ENCODE measurements at regions of chr1 and their contacts with region 1.

Region 1: DNA sequence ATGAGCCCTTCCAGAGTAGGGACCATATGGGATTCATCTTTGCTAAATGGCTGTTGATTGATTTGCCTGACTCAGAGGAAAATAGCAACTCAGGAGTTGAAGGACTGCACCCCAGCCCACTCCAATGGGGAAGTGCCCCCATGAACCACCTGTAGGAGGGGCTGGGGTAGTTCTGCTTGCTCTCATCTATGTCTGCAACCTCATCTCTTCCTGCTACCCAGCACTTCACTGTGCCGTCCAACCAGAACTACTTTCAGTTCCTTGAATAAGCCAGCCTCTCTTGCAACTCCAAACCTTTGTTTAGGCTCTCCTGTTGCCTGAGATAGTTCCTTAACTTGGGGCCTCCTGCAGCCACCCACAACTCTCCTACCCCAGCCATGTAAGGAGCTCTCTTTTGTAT is 26.6 kb downstream of the BEND5 start:
- DNase-seq: no peak
- H3K4me3 ChIP-seq: no peak overlapping the region
- H3K27ac ChIP-seq: no peak overlapping the region
- H3K4me1 ChIP-seq: peaks cover 0 to 16% (median 5%) of the 10 kb centered on the region in 4 donors
- H3K27me3 ChIP-seq: no peaks in the 10 kb centered on the region
- CTCF ChIP-seq: no peak
- EP300 ChIP-seq: no peak
- POLR2A ChIP-seq: no peak

Region 2: DNA sequence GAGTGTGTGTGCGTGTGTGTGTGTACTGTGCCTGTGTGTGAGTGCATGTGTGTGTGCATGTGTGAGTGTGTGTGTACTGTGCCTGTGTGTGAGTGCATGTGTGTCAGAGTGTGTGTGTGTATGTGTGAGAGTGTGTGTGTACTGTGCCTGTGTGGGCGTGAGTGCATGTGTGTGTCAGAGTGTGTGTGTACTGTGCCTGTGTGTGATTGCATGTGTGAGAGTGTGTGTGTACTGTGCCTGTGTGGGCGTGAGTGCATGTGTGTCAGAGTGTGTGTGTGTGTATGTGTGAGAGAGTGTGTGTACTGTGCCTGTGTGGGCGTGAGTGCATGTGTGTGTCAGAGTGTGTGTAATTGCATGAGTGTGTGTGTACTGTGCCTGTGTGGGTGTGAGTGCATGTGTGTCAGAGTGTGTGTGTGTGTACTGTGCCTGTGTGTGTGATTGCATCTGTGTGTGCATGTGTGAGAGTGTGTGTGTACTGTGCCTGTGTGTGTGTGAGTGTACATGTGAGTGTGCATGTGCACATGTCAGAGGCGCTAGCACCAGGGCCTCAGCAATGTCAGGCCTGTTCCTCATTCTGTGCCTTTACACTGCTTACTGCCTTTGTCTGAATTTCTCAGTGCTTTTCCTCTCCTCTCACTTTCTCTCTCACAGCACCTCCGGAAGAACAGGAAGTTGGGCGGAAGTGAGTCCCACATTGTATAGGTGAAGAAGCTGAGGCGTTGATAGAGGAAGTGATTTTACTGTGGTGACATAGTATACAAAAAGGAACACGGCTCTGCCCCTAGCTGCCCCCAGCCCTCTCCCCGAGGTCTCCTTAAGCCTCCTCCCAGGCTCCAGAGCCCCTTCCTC is 522.7 kb before region 1 on chr1:
- intact Hi-C with region 1: no loop called
- DNase-seq: no peak
- H3K4me3 ChIP-seq: no peak overlapping the region
- H3K27ac ChIP-seq: no peak overlapping the region
- H3K4me1 ChIP-seq: no peaks in the 10 kb centered on the region
- H3K27me3 ChIP-seq: peaks cover 0 to 14% (median 3%) of the 10 kb centered on the region in 3 donors
- CTCF ChIP-seq: no peak
- EP300 ChIP-seq: no peak
- POLR2A ChIP-seq: no peak

Region 3: GRCh38 chr1:48688102-48688760 is 61.9 kb before region 1 on chr1:
- intact Hi-C with region 1: no loop called
- DNase-seq: no peak
- H3K4me3 ChIP-seq: no peak overlapping the region
- H3K27ac ChIP-seq: no peak overlapping the region
- H3K4me1 ChIP-seq: peaks cover 0 to 11% (median 4%) of the 10 kb centered on the region in 4 donors
- H3K27me3 ChIP-seq: no peaks in the 10 kb centered on the region
- CTCF ChIP-seq: no peak
- EP300 ChIP-seq: no peak
- POLR2A ChIP-seq: no peak

Region 4: DNA sequence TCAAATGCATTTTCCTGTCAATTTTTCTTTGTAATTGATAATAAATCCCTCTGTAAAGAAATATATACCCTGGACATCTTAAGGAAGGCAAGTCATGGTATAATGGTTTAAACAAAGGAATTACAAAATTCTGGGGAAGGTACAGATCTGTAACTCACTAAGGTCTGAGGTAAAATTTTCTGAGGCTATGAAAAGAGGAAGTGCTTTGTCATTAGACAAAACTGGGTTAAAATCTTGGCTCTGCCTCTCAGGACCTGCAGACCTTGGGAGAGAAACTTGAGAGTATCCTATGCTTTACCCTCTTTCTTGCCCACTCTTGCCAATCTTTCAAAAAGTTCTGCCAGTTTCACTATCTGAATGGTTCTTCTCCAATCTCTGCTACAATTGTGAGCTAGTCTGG is 53.4 kb after region 1 on chr1:
- intact Hi-C with region 1: loop called (anchors 5 kb)
- DNase-seq: no peak
- H3K4me3 ChIP-seq: no peak overlapping the region
- H3K27ac ChIP-seq: peak overlapping the region in 1 of 4 donors; percentile 33
- H3K4me1 ChIP-seq: peaks cover 0 to 39% (median 26%) of the 10 kb centered on the region in 4 donors
- H3K27me3 ChIP-seq: no peaks in the 10 kb centered on the region
- CTCF ChIP-seq: no peak
- EP300 ChIP-seq: no peak
- POLR2A ChIP-seq: no peak